Adrenal gland (tissue), 19 donors: ENCODE measurements at regions of chr16 and their contacts with region 1.

Region 1: DNA sequence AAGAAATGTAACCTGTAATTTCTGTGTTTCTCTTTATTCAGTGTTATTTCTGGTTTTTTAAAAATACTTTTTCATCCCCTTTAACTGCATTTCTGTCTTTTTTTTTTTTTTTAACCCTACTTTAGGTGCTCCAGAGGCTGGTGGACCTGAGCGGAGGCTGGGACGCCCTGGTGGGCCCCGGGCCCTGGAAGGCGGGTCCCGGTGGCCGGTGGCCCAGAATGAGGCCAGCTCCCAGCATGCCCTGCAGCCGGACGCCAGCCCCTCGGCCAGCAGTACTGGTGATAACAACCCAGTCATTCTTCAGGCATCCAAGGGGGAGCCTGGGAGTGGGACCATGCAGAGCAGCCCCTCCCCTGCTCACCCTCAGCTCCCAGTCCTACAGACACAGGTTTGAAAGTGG is 1.5 kb downstream of the SRCAP start:
- DNase-seq: peak in 3 of 7 donors; percentile 40 to 44 (median 43)
- H3K4me3 ChIP-seq: no peak overlapping the region
- H3K27ac ChIP-seq: no peak overlapping the region
- H3K4me1 ChIP-seq: peaks cover 8 to 21% of the 10 kb centered on the region in 2 donors
- H3K27me3 ChIP-seq: no peaks in the 10 kb centered on the region
- CTCF ChIP-seq: no peak
- POLR2A ChIP-seq: no peak

Region 2: DNA sequence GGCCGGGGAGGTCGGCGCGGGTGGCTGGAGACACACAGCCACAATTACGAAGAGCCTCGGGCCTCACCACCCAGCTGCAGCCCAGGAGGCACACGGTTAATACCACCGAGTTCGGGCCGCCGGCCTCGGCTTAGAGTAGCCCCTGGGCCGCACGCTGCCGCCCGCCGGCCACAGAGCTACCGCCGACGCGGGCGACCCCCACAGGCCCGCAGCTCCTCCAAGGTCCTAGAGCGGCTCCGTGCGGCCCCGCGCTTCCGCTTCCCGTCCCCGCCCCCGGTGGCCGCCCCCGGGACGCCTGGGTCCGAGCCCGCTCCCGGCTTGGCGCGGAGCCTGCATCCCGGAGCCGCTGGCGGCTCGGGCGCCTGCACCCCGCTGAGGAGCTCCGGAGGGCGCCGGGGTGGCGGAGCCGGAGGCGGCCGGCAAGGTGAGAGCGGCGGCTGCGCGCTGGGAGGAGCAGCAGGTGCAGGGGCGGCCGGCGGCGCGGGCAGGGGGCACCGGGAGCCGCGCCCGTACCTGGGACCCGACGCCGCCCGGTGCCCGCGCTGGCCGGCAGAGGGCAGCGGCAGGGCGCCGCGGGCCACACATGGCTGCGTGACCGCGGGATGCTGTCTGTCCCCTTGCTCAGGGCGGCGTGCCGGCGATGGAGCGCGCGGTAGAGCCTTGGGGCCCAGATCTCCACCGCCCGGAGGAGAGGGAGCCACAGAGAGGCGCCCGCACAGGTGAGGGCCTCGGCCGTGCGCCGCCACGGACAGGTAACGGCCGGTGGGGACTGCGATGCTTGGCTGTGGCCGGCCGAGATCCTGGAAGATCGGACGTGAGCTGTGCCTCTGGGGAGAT is 305.1 kb before region 1 on chr16 and contains the start of gene ZNF48:
- intact Hi-C with region 1: no loop called
- DNase-seq: peak; percentile 87 to 93 (median 90)
- H3K4me3 ChIP-seq: peak within 1 kb of the TSS in 3 of 4 donors; percentile 38 to 100 (median 71)
- H3K27ac ChIP-seq: peak within 1 kb of the TSS; percentile 75 to 91 (median 88)
- H3K4me1 ChIP-seq: peaks cover 13 to 25% of the 10 kb centered on the region in 2 donors
- H3K27me3 ChIP-seq: no peaks in the 10 kb centered on the region
- CTCF ChIP-seq: peak in 4 of 6 experiments; percentile 25 to 62 (median 52)
- POLR2A ChIP-seq: peak in 1 of 2 donors; percentile 50
- total RNA-seq, gene ZNF48: 5.7 to 23.8 (median 8.9) TPM

Region 3: DNA sequence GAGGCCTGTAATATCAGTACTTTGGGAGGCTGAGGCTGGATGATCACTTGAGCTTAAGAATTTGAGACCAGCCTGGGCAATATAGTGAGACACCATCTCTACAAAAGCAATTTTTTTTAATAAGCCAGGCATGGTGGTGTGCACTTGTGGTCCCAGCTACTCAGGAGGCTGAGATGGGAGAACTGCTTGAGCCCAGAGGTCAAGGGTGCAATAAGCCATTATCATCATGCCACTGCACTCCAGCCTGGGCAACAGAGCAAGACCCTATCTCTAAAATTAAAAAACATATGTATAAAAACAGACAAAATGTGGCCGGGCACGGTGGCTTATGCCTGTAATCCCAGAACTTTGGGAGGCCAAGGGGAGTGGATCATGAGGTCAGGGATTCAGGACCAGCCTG is 111.8 kb before region 1 on chr16:
- intact Hi-C with region 1: no loop called
- DNase-seq: no peak
- H3K4me3 ChIP-seq: no peak overlapping the region
- H3K27ac ChIP-seq: no peak overlapping the region
- H3K4me1 ChIP-seq: peaks cover 10 to 13% of the 10 kb centered on the region in 2 donors
- H3K27me3 ChIP-seq: no peaks in the 10 kb centered on the region
- CTCF ChIP-seq: no peak
- POLR2A ChIP-seq: no peak

Region 4: DNA sequence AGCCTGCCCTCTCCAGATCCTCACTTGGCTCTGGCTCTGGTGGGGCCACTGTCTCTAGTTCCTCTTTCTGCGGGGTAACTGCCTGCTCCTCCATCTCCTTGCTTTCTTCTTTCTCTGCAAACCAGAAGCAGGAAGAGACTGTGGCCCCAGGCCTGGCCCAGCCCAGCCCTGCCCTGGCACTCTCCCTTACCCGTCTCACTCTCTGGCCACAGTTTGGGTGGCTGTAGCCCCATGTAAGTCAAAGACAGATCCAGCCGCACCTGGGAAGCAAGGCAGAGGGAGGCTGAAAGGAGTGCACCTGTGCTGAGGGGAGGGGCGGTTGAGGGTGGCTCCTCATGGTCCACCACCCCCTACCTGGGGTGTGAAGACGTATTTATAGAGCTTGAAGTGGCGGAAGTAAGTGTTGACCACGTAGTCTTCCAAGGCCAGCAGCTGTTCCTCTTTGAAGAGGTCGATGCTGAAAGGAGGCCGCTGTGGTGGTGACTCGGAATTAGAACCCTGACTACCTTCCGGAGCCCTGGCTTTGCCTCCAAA is 58.6 kb after region 1 on chr16:
- intact Hi-C with region 1: loop called in 1 of 2 experiments (anchors 10 kb)
- DNase-seq: peak in 2 of 7 donors; percentile 17 to 26
- H3K4me3 ChIP-seq: no peak overlapping the region
- H3K27ac ChIP-seq: peak overlapping the region in 2 of 5 donors; percentile 17 to 60
- H3K4me1 ChIP-seq: peaks cover 22 to 27% of the 10 kb centered on the region in 2 donors
- H3K27me3 ChIP-seq: no peaks in the 10 kb centered on the region
- CTCF ChIP-seq: no peak
- POLR2A ChIP-seq: no peak